SK-N-SH (cell line): ENCODE measurements at regions of chr4 and their contacts with region 1.

Region 1: GRCh38 chr4:25367004-25367621 is 9.9 kb upstream of the ANAPC4 start:
- DNase-seq: peak; percentile 19
- H3K4me3 ChIP-seq: no peak overlapping the region; a peak in 1 of 4 replicates
- H3K27ac ChIP-seq: no peak overlapping the region
- H3K4me1 ChIP-seq: no peaks in the 10 kb centered on the region
- H3K27me3 ChIP-seq: no peaks in the 10 kb centered on the region
- CTCF ChIP-seq: peak; percentile 91
- EP300 ChIP-seq: no peak
- RAD21 ChIP-seq: peak; percentile 75

Region 2: GRCh38 chr4:24980064-24980690 is 386.9 kb before region 1 on chr4:
- CTCF ChIA-PET with region 1: interaction called, 40 read pairs
- POLR2A ChIA-PET with region 1: no interaction called
- DNase-seq: peak; percentile 53
- H3K4me3 ChIP-seq: peak overlapping the region in 1 of 2 experiments; percentile 38; a peak in 1 of 4 replicates
- H3K27ac ChIP-seq: no peak overlapping the region
- H3K4me1 ChIP-seq: no peaks in the 10 kb centered on the region; a peak in 1 of 4 replicates
- H3K27me3 ChIP-seq: no peaks in the 10 kb centered on the region
- CTCF ChIP-seq: peak; percentile 88
- EP300 ChIP-seq: no peak
- RAD21 ChIP-seq: peak; percentile 68

Region 3: GRCh38 chr4:25180524-25181131 is 186.5 kb before region 1 on chr4:
- CTCF ChIA-PET with region 1: interaction called, 21 read pairs
- POLR2A ChIA-PET with region 1: no interaction called
- DNase-seq: peak; percentile 20
- H3K4me3 ChIP-seq: no peak overlapping the region
- H3K27ac ChIP-seq: no peak overlapping the region
- H3K4me1 ChIP-seq: no peaks in the 10 kb centered on the region
- H3K27me3 ChIP-seq: no peaks in the 10 kb centered on the region
- CTCF ChIP-seq: peak; percentile 76
- EP300 ChIP-seq: no peak
- RAD21 ChIP-seq: peak; percentile 59

Region 4: GRCh38 chr4:25271866-25272265 is 95.2 kb before region 1 on chr4:
- CTCF ChIA-PET with region 1: no interaction called
- POLR2A ChIA-PET with region 1: no interaction called
- DNase-seq: no peak
- H3K4me3 ChIP-seq: no peak overlapping the region
- H3K27ac ChIP-seq: no peak overlapping the region
- H3K4me1 ChIP-seq: no peaks in the 10 kb centered on the region
- H3K27me3 ChIP-seq: no peaks in the 10 kb centered on the region
- CTCF ChIP-seq: no peak
- EP300 ChIP-seq: no peak
- RAD21 ChIP-seq: no peak

Region 5: GRCh38 chr4:25330905-25331808 is 36.0 kb before region 1 on chr4:
- CTCF ChIA-PET with region 1: interaction called, 12 read pairs
- POLR2A ChIA-PET with region 1: no interaction called
- DNase-seq: no peak
- H3K4me3 ChIP-seq: no peak overlapping the region
- H3K27ac ChIP-seq: no peak overlapping the region
- H3K4me1 ChIP-seq: no peaks in the 10 kb centered on the region; a peak in 1 of 4 replicates
- H3K27me3 ChIP-seq: no peaks in the 10 kb centered on the region
- CTCF ChIP-seq: no peak
- EP300 ChIP-seq: no peak
- RAD21 ChIP-seq: no peak

Region 6: DNA sequence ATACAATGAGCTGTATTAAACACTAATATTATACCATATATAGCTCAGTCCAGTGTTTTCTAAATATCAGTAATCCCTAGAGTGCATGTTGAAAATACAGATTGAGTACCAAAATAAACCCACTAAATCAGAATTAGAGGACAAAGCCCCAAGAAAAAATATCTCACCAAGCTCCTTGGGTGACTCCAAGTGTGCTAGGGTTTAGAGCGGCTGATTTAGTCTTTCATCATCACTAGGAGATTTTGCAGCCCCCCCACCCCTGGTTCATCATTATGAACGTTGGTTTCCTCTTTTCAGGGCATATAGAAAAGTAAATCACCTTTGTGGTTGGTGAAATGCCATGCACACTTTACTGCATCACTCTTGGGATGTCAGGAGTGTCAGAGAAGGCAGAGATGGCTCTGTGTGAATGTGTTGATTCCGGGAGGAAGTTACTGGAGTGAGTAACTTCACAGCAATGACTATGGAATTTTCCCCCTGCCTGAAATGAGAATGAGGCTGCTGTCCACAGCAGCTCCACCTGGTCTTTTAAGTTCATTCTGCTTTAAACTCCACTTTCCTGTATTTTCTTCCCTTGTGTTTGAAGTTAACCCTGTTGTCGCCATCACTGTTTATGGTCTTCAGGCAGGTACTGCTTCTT is 15.2 kb before region 1 on chr4:
- CTCF ChIA-PET with region 1: interaction called, 35 read pairs
- POLR2A ChIA-PET with region 1: no interaction called
- DNase-seq: no peak
- H3K4me3 ChIP-seq: no peak overlapping the region
- H3K27ac ChIP-seq: peak overlapping the region in 1 of 2 experiments; percentile 5; a peak in 2 of 4 replicates
- H3K4me1 ChIP-seq: peaks cover 0 to 6% of the 10 kb centered on the region in 2 experiments; a peak in 1 of 4 replicates
- H3K27me3 ChIP-seq: no peaks in the 10 kb centered on the region
- CTCF ChIP-seq: no peak
- EP300 ChIP-seq: no peak
- RAD21 ChIP-seq: no peak

Region 7: GRCh38 chr4:25386926-25387325 is 19.8 kb after region 1 on chr4:
- CTCF ChIA-PET with region 1: interaction called, 18 read pairs
- POLR2A ChIA-PET with region 1: no interaction called
- DNase-seq: no peak
- H3K4me3 ChIP-seq: no peak overlapping the region
- H3K27ac ChIP-seq: no peak overlapping the region
- H3K4me1 ChIP-seq: no peaks in the 10 kb centered on the region
- H3K27me3 ChIP-seq: no peaks in the 10 kb centered on the region
- CTCF ChIP-seq: no peak
- EP300 ChIP-seq: no peak
- RAD21 ChIP-seq: no peak